H1 (cell line): ENCODE measurements at regions of chr14 and their contacts with region 1.

Region 1: GRCh38 chr14:65019944-65020566 is 33.4 kb downstream of the FNTB start:
- DNase-seq: no peak
- H3K4me3 ChIP-seq: no peak overlapping the region
- H3K27ac ChIP-seq: no peak overlapping the region
- H3K4me1 ChIP-seq: no peaks in the 10 kb centered on the region
- H3K27me3 ChIP-seq: no peaks in the 10 kb centered on the region
- CTCF ChIP-seq: peak in 2 of 3 experiments; percentile 64 to 67; a peak in 3 of 4 replicates
- EP300 ChIP-seq: no peak
- POLR2A ChIP-seq: no peak
- RAD21 ChIP-seq: peak; percentile 49 to 61; a peak in 3 of 4 replicates

Region 2: GRCh38 chr14:64855721-64856528 is 164.1 kb before region 1 on chr14:
- CTCF ChIA-PET with region 1: no interaction called
- POLR2A ChIA-PET with region 1: no interaction called
- DNase-seq: no peak
- H3K4me3 ChIP-seq: no peak overlapping the region
- H3K27ac ChIP-seq: no peak overlapping the region
- H3K4me1 ChIP-seq: peaks cover 12 to 19% (median 14%) of the 10 kb centered on the region in 4 experiments
- H3K27me3 ChIP-seq: no peaks in the 10 kb centered on the region
- CTCF ChIP-seq: no peak
- EP300 ChIP-seq: no peak
- POLR2A ChIP-seq: no peak
- RAD21 ChIP-seq: no peak

Region 3: GRCh38 chr14:64986578-64987571 is 33.2 kb before region 1 on chr14 and contains the start of gene FNTB:
- CTCF ChIA-PET with region 1: interaction called, 45 read pairs
- POLR2A ChIA-PET with region 1: interaction called, 10 read pairs
- DNase-seq: peak; percentile 90 to 95
- H3K4me3 ChIP-seq: peak within 1 kb of the TSS; percentile 55 to 75 (median 74)
- H3K27ac ChIP-seq: peak within 1 kb of the TSS; percentile 42; the same call in 1 of the 2 replicates
- H3K4me1 ChIP-seq: peaks cover 0 to 2% (median 0%) of the 10 kb centered on the region in 4 experiments; a peak in 2 of 7 replicates
- H3K27me3 ChIP-seq: no peaks in the 10 kb centered on the region; a peak in 2 of 7 replicates
- CTCF ChIP-seq: peak; percentile 77 to 93 (median 85)
- EP300 ChIP-seq: no peak
- POLR2A ChIP-seq: peak in 1 of 2 experiments; percentile 69; a peak in 2 of 3 replicates
- RAD21 ChIP-seq: peak; percentile 84 to 87
- total RNA-seq, gene FNTB: 13.8 and 16.0 TPM in 2 replicates

Region 4: DNA sequence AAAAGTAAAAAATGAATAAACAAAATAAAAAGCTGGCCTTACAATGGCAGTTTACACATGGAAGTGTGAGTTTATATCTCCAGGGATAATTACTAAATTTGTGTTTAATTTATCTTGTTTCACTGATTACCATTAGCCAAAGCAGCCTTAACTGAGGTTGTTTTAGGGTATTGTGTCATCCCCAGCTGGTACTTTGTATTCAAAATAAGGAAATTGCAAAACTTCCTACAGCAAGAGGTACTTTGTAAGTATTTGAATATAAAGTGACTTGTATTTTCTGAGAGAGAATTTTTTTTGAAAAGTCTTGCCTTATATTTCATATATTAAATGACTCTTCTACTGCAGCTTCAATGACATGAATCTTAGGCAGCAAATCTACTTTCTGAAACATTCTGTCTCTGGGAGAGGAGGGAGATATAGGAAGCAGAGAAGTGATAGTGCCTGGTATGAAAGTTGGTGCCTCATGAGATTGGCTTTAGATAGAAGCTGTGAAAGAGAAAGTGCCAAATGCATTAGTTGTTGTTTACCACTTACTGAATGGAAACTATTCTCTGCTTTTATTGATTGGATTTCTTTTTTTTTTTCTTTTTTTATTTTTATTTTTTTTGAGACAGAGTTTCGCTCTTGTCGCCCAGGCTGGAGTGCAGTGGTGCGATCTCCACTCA is 26.7 kb before region 1 on chr14:
- CTCF ChIA-PET with region 1: interaction called, 19 read pairs
- POLR2A ChIA-PET with region 1: no interaction called
- DNase-seq: no peak
- H3K4me3 ChIP-seq: no peak overlapping the region
- H3K27ac ChIP-seq: no peak overlapping the region
- H3K4me1 ChIP-seq: no peaks in the 10 kb centered on the region; a peak in 1 of 7 replicates
- H3K27me3 ChIP-seq: no peaks in the 10 kb centered on the region
- CTCF ChIP-seq: no peak
- EP300 ChIP-seq: no peak
- POLR2A ChIP-seq: no peak
- RAD21 ChIP-seq: no peak

Region 5: GRCh38 chr14:65003394-65003793 is 16.7 kb before region 1 on chr14:
- CTCF ChIA-PET with region 1: interaction called, 21 read pairs
- POLR2A ChIA-PET with region 1: no interaction called
- DNase-seq: no peak
- H3K4me3 ChIP-seq: no peak overlapping the region
- H3K27ac ChIP-seq: no peak overlapping the region
- H3K4me1 ChIP-seq: peaks cover 0 to 4% (median 0%) of the 10 kb centered on the region in 4 experiments; a peak in 4 of 7 replicates
- H3K27me3 ChIP-seq: no peaks in the 10 kb centered on the region
- CTCF ChIP-seq: no peak
- EP300 ChIP-seq: no peak
- POLR2A ChIP-seq: no peak
- RAD21 ChIP-seq: no peak

Region 6: GRCh38 chr14:65035049-65035448 is 15.0 kb after region 1 on chr14:
- CTCF ChIA-PET with region 1: interaction called, 34 read pairs
- POLR2A ChIA-PET with region 1: no interaction called
- DNase-seq: no peak
- H3K4me3 ChIP-seq: no peak overlapping the region
- H3K27ac ChIP-seq: no peak overlapping the region
- H3K4me1 ChIP-seq: no peaks in the 10 kb centered on the region
- H3K27me3 ChIP-seq: no peaks in the 10 kb centered on the region
- CTCF ChIP-seq: no peak
- EP300 ChIP-seq: no peak
- POLR2A ChIP-seq: no peak
- RAD21 ChIP-seq: no peak

Region 7: GRCh38 chr14:65206448-65207096 is 186.5 kb after region 1 on chr14:
- CTCF ChIA-PET with region 1: no interaction called
- POLR2A ChIA-PET with region 1: no interaction called
- DNase-seq: no peak
- H3K4me3 ChIP-seq: no peak overlapping the region
- H3K27ac ChIP-seq: no peak overlapping the region
- H3K4me1 ChIP-seq: peaks cover 0 to 3% (median 0%) of the 10 kb centered on the region in 4 experiments; a peak in 2 of 7 replicates
- H3K27me3 ChIP-seq: no peaks in the 10 kb centered on the region
- CTCF ChIP-seq: no peak
- EP300 ChIP-seq: no peak
- POLR2A ChIP-seq: no peak
- RAD21 ChIP-seq: no peak